Thyroid gland (tissue), 4 donors: ENCODE measurements at regions of chr4 and their contacts with region 1.

Region 1: DNA sequence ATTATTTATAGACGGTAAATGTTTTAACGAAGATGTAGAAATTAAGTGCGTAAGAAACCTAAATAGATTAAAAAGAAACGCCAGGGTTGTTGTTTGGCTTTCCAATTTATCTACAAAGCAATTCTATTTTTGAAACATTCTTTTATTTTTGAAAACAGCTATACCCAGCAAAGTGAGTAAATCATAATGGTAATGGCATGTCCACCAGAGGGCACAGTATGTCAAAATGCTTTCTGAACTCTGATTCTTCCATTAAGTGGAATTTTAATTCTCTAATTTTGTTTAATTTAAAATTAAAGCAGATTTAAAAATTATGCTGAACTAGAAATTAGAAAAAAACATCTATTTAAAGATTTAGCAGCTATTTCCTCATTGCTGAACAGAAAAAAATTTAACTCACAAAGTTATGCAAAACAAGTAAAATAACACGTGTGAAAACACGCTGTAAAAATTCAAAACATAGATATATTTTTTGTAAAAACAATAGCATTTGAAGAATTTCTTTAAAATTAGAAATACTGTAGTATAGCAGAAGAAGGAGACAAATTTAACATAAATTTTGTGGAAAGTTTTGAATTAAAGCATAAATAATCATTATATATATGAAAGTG is 26.5 kb downstream of the RASSF6 start:
- DNase-seq: peak in 1 of 2 donors; percentile 6
- H3K4me3 ChIP-seq: no peak overlapping the region
- H3K27ac ChIP-seq: no peak overlapping the region
- H3K4me1 ChIP-seq: no peaks in the 10 kb centered on the region
- H3K27me3 ChIP-seq: no peaks in the 10 kb centered on the region
- CTCF ChIP-seq: peak in 4 of 6 experiments; percentile 9 to 65 (median 54)
- POLR2A ChIP-seq: no peak

Region 2: GRCh38 chr4:73653695-73654106 is 60.0 kb after region 1 on chr4:
- intact Hi-C with region 1: loop called (anchors 2 kb)
- DNase-seq: peak; percentile 31 to 38
- H3K4me3 ChIP-seq: no peak overlapping the region
- H3K27ac ChIP-seq: no peak overlapping the region
- H3K4me1 ChIP-seq: no peaks in the 10 kb centered on the region
- H3K27me3 ChIP-seq: no peaks in the 10 kb centered on the region
- CTCF ChIP-seq: peak; percentile 32 to 91 (median 50)
- POLR2A ChIP-seq: no peak

Region 3: GRCh38 chr4:73718375-73719373 is 124.9 kb after region 1 on chr4:
- intact Hi-C with region 1: no loop called
- DNase-seq: no peak
- H3K4me3 ChIP-seq: no peak overlapping the region
- H3K27ac ChIP-seq: peak overlapping the region in 2 of 3 donors; percentile 9 to 19
- H3K4me1 ChIP-seq: peaks cover 5 to 20% of the 10 kb centered on the region in 2 donors
- H3K27me3 ChIP-seq: no peaks in the 10 kb centered on the region
- CTCF ChIP-seq: no peak
- POLR2A ChIP-seq: no peak

Region 4: DNA sequence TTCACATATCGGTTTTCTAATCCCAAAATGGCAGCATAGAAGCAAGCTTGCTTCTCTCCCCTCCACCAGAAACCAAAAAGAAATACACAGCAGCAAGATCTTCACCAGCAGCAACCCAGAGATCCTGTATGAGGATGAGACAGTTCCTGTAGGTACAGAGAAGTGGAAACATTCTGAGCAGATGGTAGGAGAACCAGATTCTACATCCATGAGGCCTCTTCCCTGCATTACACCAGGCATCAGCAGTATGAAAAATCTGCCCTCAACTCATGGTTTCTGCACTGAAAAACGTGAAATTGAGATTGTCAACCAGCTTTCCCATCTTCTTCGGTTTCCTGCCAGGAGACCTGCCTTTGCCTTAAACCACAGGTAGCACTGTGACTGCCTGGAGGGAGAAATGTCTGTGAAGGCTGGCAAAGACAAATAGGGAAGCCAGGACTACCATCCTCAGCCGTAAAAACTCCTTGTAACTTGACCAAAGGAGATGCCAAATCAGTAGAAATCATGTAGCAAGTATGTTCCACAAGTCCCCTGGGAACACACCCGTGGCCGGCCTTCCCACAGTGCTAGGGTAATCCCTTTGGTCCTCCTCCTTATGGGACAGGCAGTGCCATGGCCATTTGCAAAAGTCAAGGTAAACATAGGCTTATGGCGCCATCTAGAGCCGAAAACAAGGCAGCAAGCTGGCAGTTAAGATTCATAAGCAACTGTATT is 540.2 kb after region 1 on chr4:
- intact Hi-C with region 1: loop called (anchors 10 kb)
- DNase-seq: peak; percentile 76 to 78
- H3K4me3 ChIP-seq: no peak overlapping the region
- H3K27ac ChIP-seq: no peak overlapping the region
- H3K4me1 ChIP-seq: no peaks in the 10 kb centered on the region
- H3K27me3 ChIP-seq: no peaks in the 10 kb centered on the region
- CTCF ChIP-seq: peak; percentile 55 to 85 (median 82)
- POLR2A ChIP-seq: no peak